A673 (cell line): ENCODE measurements at regions of chr10 and their contacts with region 1.

Region 1: DNA sequence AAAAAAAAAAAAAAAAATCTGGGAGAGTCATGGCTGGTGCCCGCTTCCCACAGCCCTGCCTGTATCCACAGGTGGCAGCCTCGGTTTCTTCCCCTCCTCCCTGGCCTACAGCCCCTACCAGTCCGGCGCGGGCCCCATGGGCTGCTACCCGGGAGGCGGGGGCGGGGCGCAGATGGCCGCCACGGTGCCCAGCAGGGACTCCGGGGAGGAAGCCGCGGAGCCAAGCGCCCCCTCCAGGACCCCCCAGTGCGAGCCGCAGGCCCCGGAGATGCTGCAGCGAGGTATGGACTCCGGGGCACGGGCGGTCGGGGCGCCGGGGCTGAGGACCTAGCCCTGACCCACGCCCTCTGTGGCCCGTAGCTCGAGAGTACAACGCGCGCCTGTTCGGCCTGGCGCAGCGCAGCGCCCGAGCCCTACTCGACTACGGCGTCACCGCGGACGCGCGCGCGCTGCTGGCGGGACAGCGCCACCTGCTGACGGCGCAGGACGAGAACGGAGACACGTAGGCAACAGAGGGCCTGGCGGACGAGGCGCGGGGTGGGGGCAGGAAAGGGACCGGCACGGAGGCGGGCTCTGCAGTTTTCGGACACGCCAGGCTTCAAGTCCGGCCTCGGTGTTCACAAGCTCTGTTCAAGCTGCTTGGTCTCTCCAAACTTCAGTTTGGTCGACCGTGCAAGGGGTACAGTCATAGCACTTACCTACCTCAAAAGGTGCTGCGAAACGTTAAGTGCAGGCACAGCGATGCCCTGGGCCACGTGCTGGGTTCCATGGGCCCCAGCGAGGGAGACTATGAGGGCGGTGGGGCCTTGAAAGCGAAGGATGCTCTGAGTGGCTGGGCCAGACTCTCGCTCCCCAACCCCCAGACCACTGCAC is 3.9 kb downstream of the NFKB2 start:
- DNase-seq: peak; percentile 89
- H3K4me3 ChIP-seq: peak overlapping the region; percentile 65
- H3K27ac ChIP-seq: peak overlapping the region; percentile 86
- H3K4me1 ChIP-seq: peaks cover 9% of the 10 kb centered on the region
- H3K27me3 ChIP-seq: no peaks in the 10 kb centered on the region
- CTCF ChIP-seq: peak; percentile 97

Region 2: GRCh38 chr10:102167861-102168260 is 231.6 kb before region 1 on chr10:
- CTCF ChIA-PET with region 1: interaction called, 13 read pairs
- POLR2A ChIA-PET with region 1: no interaction called
- intact Hi-C with region 1: loop called (anchors 5 kb)
- DNase-seq: no peak
- H3K4me3 ChIP-seq: no peak overlapping the region
- H3K27ac ChIP-seq: no peak overlapping the region
- H3K4me1 ChIP-seq: no peaks in the 10 kb centered on the region
- H3K27me3 ChIP-seq: no peaks in the 10 kb centered on the region
- CTCF ChIP-seq: no peak